Thyroid gland (tissue), 4 donors: ENCODE measurements at regions of chr2 and their contacts with region 1.

Region 1: GRCh38 chr2:20642055-20642971 is 8.6 kb downstream of the HS1BP3 start:
- DNase-seq: peak; percentile 70 to 74
- H3K4me3 ChIP-seq: no peak overlapping the region
- H3K27ac ChIP-seq: no peak overlapping the region
- H3K4me1 ChIP-seq: peaks cover 4 to 23% of the 10 kb centered on the region in 2 donors
- H3K27me3 ChIP-seq: no peaks in the 10 kb centered on the region
- CTCF ChIP-seq: peak; percentile 69 to 94 (median 89)
- POLR2A ChIP-seq: no peak

Region 2: GRCh38 chr2:19989681-19990415 is 652.5 kb before region 1 on chr2 and contains the start of gene WDR35:
- intact Hi-C with region 1: no loop called
- DNase-seq: peak; percentile 93
- H3K4me3 ChIP-seq: peak within 1 kb of the TSS; percentile 63 to 82 (median 76)
- H3K27ac ChIP-seq: peak within 1 kb of the TSS in 2 of 3 donors; percentile 15 to 26
- H3K4me1 ChIP-seq: peaks cover 6 to 10% of the 10 kb centered on the region in 2 donors
- H3K27me3 ChIP-seq: no peaks in the 10 kb centered on the region
- CTCF ChIP-seq: no peak
- POLR2A ChIP-seq: peak in 1 of 2 donors; percentile 75
- total RNA-seq, gene WDR35: 17.6 to 19.2 (median 18.1) TPM

Region 3: DNA sequence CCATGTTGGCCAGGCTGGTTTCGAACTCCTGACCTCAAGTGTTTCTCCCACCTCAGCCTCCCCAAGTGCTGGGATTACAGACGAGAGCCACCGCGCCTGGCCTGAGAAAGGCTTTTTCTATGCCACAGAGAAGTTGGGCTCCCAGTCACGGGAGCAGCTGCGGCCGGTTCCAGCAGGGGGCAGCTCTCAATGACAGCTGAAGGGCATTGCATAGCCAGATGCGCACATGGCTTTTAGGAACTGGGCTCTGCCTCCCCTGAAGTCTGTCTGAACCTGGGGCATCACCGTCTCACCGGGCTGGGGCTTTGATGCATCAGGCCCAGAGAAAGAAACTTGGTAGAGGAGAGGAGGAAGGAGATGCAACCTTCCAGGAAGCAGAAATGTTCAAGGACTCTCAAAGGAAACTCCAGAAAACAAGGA is 506.7 kb before region 1 on chr2:
- intact Hi-C with region 1: loop called (anchors 10 kb)
- DNase-seq: peak; percentile 85 to 89
- H3K4me3 ChIP-seq: no peak overlapping the region
- H3K27ac ChIP-seq: peak overlapping the region; percentile 26 to 49 (median 36)
- H3K4me1 ChIP-seq: no peaks in the 10 kb centered on the region
- H3K27me3 ChIP-seq: no peaks in the 10 kb centered on the region
- CTCF ChIP-seq: peak; percentile 27 to 96 (median 84)
- POLR2A ChIP-seq: no peak

Region 4: GRCh38 chr2:20403774-20404312 is 238.5 kb before region 1 on chr2:
- intact Hi-C with region 1: loop called (anchors 10 kb)
- DNase-seq: no peak
- H3K4me3 ChIP-seq: no peak overlapping the region
- H3K27ac ChIP-seq: no peak overlapping the region
- H3K4me1 ChIP-seq: no peaks in the 10 kb centered on the region
- H3K27me3 ChIP-seq: no peaks in the 10 kb centered on the region
- CTCF ChIP-seq: no peak
- POLR2A ChIP-seq: no peak

Region 5: DNA sequence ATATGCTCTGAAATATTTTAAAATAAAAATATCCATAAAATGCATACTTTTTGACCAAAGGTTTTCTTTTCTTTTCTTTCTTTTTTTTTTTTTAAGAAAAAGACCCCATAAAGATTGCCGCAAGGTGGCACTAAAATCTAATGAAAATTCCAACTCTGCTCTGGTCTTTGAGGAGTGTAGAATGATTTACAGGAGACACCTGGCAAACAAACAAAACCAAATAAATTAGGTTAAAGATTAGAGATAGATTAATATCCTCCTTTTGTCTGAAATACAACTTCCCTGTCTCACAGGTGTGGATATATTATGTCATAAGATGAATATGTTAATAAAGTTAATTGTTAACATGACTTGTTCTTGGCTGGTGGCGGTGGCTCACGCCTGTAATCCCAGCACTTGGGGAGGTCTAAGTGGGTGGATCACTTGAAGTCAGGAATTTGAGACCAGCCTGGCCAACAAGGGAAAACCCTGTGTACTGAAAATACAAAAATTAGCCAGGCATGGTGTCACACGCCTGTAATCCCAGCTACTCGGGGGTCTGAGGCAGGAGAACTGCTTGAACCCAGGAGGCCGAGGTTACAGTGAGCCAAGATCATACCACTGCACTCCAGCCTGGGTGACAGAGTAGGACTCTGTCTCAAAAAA is 198.9 kb before region 1 on chr2:
- intact Hi-C with region 1: loop called (anchors 5 kb)
- DNase-seq: peak; percentile 79 to 82
- H3K4me3 ChIP-seq: no peak overlapping the region
- H3K27ac ChIP-seq: peak overlapping the region; percentile 81 to 88 (median 82)
- H3K4me1 ChIP-seq: peaks cover 14 to 29% of the 10 kb centered on the region in 2 donors
- H3K27me3 ChIP-seq: no peaks in the 10 kb centered on the region
- CTCF ChIP-seq: peak in 5 of 6 experiments; percentile 8 to 76 (median 49)
- POLR2A ChIP-seq: no peak